Mammary epithelial cell (primary cell): ENCODE measurements at regions of chr13 and their contacts with region 1.

Region 1: DNA sequence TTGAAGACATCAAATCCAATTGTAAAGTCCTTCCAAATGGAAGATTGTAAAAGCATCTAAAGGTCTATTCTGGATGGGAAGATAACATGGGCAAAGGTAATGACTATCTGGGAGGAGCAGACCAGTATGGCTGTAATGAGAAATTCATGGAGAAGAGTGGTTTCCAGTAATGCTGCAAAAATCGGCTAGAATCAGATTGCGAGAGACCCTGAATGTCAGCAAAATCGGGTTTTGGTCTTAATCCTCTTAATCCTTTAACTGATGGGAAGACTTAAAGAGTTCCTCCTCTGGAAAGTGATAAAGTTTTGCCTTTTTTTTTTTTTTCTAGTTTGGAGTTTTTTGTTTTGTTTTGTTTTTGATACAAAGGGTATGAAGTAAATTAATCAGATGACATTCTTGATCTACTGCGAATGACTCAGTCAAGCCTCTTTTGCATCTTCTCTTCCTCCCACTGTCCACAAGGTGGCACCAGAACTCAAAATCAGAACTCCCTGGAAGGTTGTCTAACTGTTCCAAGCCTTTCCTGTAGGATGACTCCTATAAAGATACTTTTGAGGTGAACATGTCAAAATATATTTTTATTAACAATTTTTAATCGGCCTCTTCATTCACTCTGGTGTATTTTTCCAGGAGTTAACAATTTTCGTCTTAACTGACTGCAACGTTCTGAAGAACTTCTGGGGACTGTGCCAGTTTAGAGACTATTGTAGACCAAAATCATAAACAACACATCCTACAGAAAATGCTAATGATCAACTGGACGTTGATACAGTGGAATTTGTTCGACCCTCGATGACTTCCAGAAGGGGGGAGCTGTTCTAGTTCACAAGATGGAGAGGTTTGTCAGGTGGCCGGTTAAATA is 213.3 kb upstream of the MIR17HG start:
- DNase-seq: peak; percentile 49
- H3K4me3 ChIP-seq: no peak overlapping the region
- H3K27ac ChIP-seq: no peak overlapping the region
- H3K4me1 ChIP-seq: no peaks in the 10 kb centered on the region
- H3K27me3 ChIP-seq: no peaks in the 10 kb centered on the region
- CTCF ChIP-seq: peak; percentile 71 to 81

Region 2: GRCh38 chr13:91185294-91185863 is 51.2 kb after region 1 on chr13:
- CTCF ChIA-PET with region 1: no interaction called
- dilution Hi-C with region 1: no loop called
- in situ Hi-C with region 1: no loop called
- intact Hi-C with region 1: loop called (anchors 1 kb)
- DNase-seq: peak; percentile 5
- H3K4me3 ChIP-seq: no peak overlapping the region
- H3K27ac ChIP-seq: no peak overlapping the region
- H3K4me1 ChIP-seq: no peaks in the 10 kb centered on the region
- H3K27me3 ChIP-seq: no peaks in the 10 kb centered on the region
- CTCF ChIP-seq: peak; percentile 8 to 31

Region 3: GRCh38 chr13:91247768-91248167 is 113.6 kb after region 1 on chr13:
- CTCF ChIA-PET with region 1: no interaction called
- dilution Hi-C with region 1: no loop called
- in situ Hi-C with region 1: no loop called
- intact Hi-C with region 1: loop called (anchors 1 kb)
- DNase-seq: no peak
- H3K4me3 ChIP-seq: no peak overlapping the region
- H3K27ac ChIP-seq: no peak overlapping the region
- H3K4me1 ChIP-seq: no peaks in the 10 kb centered on the region
- H3K27me3 ChIP-seq: no peaks in the 10 kb centered on the region
- CTCF ChIP-seq: peak; percentile 16 to 37

Region 4: DNA sequence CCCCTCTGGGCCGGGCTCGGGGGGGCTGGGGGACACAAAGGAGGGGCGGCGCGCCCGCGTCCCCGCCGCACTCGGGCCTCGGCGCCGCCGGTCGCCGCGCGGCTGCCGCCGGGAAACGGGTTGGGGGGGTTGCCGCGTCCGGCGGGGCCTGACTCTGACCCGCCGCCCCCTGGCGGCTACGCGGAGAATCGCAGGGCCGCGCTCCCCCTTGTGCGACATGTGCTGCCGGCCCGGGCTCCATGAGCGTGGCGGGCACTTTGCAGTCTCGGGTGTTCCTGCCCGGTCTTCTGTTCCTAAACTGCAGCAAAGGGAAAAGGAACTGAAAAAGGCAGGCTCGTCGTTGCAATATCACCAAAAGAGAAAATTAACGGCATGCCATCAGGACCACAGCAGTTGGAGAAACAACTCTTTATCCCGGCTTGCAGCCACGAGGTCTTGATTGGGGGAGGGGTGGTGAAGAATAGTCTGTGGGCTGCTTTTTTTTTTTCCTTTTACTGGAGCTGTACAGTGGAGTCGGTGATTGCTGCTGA is 214.8 kb after region 1 on chr13:
- CTCF ChIA-PET with region 1: no interaction called
- dilution Hi-C with region 1: no loop called
- in situ Hi-C with region 1: no loop called
- intact Hi-C with region 1: loop called (anchors 1 kb)
- DNase-seq: peak; percentile 83
- H3K4me3 ChIP-seq: peak overlapping the region; percentile 69 to 96 (median 95)
- H3K27ac ChIP-seq: peak overlapping the region; percentile 80
- H3K4me1 ChIP-seq: peaks cover 20% of the 10 kb centered on the region
- H3K27me3 ChIP-seq: peaks cover 5% of the 10 kb centered on the region
- CTCF ChIP-seq: peak; percentile 79 to 86

Region 5: DNA sequence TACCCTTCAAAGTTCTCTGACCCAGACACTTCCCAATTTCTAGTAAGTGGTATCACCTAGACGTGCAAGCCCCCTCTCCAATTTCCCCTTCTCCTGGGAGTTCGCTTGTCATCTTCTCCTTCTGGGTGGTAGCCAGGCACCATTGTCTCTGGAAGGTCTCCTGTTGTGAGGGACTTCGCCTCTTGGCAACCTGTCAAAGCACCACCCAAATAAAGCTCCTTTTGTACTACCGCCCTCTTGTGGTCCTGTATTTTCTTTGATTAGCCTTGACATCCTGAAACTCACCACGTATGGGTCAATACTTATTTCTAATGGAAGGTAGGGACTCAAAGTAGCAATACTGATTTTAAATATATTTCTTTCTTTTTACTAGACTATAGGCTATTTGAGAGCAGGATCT is 272.4 kb after region 1 on chr13:
- CTCF ChIA-PET with region 1: no interaction called
- dilution Hi-C with region 1: no loop called
- in situ Hi-C with region 1: no loop called
- intact Hi-C with region 1: loop called (anchors 1 kb)
- DNase-seq: peak; percentile 21
- H3K4me3 ChIP-seq: no peak overlapping the region
- H3K27ac ChIP-seq: no peak overlapping the region
- H3K4me1 ChIP-seq: no peaks in the 10 kb centered on the region
- H3K27me3 ChIP-seq: peaks cover under 1% of the 10 kb centered on the region
- CTCF ChIP-seq: peak; percentile 49 to 57

Region 6: GRCh38 chr13:91520952-91521351 is 386.8 kb after region 1 on chr13:
- CTCF ChIA-PET with region 1: no interaction called
- dilution Hi-C with region 1: no loop called
- in situ Hi-C with region 1: no loop called
- intact Hi-C with region 1: no loop called
- DNase-seq: no peak
- H3K4me3 ChIP-seq: no peak overlapping the region
- H3K27ac ChIP-seq: no peak overlapping the region
- H3K4me1 ChIP-seq: no peaks in the 10 kb centered on the region
- H3K27me3 ChIP-seq: no peaks in the 10 kb centered on the region
- CTCF ChIP-seq: no peak

Region 7: DNA sequence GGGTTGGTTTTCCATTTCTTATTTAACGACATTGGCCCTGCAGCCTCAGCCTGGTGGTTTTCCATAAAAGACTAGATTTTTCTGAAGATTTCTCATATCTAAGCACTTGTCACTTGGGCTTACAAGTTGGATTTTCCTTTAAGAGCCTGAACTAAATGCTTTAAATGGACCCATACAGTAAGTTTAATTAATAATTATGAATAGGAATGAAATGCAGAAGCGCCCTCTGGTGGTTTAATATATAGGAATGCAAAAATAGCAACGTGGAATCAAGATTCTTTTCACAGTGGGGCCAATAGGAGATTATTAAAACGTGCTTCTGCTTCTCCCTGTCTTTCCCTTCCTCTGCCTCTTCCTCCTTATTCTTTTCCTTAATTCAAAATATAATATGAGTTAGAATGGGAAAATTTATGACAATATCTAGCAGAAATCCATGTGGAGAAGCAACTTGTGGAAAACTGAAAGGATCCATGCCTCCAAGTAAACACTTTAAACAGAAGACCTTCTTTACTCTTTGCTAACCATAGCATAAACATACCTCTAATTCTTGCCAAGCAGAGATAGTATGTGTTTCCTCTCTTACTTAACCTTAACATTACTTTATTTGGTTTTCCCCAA is 588.2 kb after region 1 on chr13:
- CTCF ChIA-PET with region 1: no interaction called
- dilution Hi-C with region 1: no loop called
- in situ Hi-C with region 1: no loop called
- intact Hi-C with region 1: loop called (anchors 2 kb)
- DNase-seq: peak; percentile 2
- H3K4me3 ChIP-seq: no peak overlapping the region
- H3K27ac ChIP-seq: no peak overlapping the region
- H3K4me1 ChIP-seq: no peaks in the 10 kb centered on the region
- H3K27me3 ChIP-seq: no peaks in the 10 kb centered on the region
- CTCF ChIP-seq: peak; percentile 39 to 54

Region 8: DNA sequence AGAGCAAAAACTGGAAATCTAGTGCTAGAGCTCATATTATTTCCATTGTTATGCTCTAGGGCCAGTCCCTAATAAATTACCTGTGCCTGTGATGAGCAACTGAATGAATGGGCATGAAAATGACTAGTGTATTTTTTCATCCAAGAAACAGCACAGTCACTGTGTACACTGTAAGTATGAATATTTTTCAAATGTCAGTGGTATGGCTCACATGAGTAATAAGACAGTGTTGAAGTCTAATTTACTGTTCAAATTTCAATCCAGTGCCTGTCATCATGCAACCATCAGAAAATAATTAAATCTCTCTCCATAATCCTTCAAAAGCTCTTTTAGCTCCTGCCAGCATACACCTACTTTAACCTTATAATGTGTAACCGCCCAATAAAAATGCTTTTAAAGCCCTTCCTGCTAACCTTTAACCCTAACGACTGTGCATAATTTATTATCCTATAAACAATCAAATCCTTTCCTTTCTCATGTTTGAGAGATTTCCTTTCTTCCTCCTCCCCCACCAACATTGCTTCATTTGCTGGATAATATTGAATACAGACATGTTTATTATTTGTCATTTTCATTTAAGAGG is 642.5 kb after region 1 on chr13:
- CTCF ChIA-PET with region 1: no interaction called
- dilution Hi-C with region 1: no loop called
- in situ Hi-C with region 1: no loop called
- intact Hi-C with region 1: loop called (anchors 5 kb)
- DNase-seq: no peak
- H3K4me3 ChIP-seq: no peak overlapping the region
- H3K27ac ChIP-seq: no peak overlapping the region
- H3K4me1 ChIP-seq: no peaks in the 10 kb centered on the region
- H3K27me3 ChIP-seq: no peaks in the 10 kb centered on the region
- CTCF ChIP-seq: no peak